PC-9 (cell line): ENCODE measurements at regions of chr9 and their contacts with region 1.

Region 1: GRCh38 chr9:72526901-72527800 is 5.7 kb downstream of the TMC1 start:
- DNase-seq: peak; percentile 94 to 97
- H3K4me3 ChIP-seq: peak overlapping the region; percentile 60
- H3K27ac ChIP-seq: peak overlapping the region; percentile 96
- H3K4me1 ChIP-seq: peaks cover 67% of the 10 kb centered on the region
- H3K27me3 ChIP-seq: no peaks in the 10 kb centered on the region
- CTCF ChIP-seq: no peak

Region 2: DNA sequence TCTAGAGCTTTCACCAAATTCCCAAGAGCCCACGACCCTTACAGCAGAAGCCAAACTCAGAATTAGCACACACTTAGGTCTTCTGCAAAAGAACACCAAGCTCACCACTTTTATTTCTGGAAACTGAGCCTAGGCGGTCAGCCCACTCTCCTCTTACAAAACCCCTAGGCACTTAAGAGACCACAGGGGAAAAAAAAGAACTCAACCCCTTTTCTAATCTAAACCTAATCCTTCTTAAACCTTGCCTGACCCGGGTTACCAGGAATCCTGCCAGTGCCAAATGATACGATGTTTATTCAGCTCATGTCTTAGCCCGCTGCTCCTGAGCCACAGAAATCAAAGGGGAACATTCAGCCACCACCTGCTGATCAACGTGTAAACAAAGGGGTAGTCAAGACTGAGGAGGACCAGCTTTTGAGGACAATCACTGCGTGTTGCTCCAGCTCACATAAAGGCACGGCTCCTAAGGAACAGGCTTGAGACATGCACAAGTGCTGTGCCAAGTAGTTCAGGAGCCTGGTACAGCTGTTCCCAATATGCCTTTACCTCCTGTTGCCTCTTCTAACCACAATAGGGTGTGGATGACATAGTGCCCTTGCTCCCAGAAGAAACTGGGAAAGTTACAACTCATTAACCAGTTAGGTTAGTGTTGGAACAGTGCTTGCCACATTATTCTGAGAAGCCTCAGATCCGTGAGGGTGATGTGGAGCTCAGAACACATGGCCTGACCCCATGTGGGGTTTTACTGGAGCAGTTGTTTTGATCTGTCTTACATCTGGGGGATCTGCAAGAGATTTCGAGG is 211.4 kb before region 1 on chr9:
- CTCF ChIA-PET with region 1: no interaction called
- POLR2A ChIA-PET with region 1: no interaction called
- intact Hi-C with region 1: loop called (anchors 5 kb)
- DNase-seq: peak; percentile 68 to 92
- H3K4me3 ChIP-seq: peak overlapping the region; percentile 36; the same call in 1 of the 2 replicates
- H3K27ac ChIP-seq: peak overlapping the region; percentile 70
- H3K4me1 ChIP-seq: peaks cover 39% of the 10 kb centered on the region
- H3K27me3 ChIP-seq: no peaks in the 10 kb centered on the region
- CTCF ChIP-seq: no peak

Region 3: GRCh38 chr9:72464857-72465592 is 62.1 kb before region 1 on chr9:
- CTCF ChIA-PET with region 1: no interaction called
- POLR2A ChIA-PET with region 1: interaction called, 13 read pairs
- intact Hi-C with region 1: no loop called
- DNase-seq: no peak
- H3K4me3 ChIP-seq: no peak overlapping the region
- H3K27ac ChIP-seq: no peak overlapping the region
- H3K4me1 ChIP-seq: no peaks in the 10 kb centered on the region
- H3K27me3 ChIP-seq: no peaks in the 10 kb centered on the region
- CTCF ChIP-seq: no peak

Region 4: DNA sequence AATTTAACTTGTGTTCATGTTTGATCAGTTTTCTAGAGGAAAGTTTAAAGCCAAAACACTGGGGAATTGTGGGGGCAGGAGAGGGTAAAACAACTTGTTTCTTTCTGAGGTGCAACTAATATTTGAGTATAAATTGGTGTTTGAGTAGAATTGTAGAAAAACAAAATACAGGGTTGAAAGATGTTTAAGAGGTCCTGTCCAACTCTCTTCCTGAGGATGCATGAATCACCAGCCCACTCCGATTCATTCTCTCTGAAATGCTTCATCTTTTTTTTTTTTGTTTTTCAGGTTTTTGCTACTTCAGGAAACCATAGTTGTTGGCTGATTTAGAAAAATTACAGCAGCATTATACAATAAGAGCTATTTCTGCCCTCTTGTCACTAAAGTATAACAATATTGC is 48.2 kb before region 1 on chr9:
- CTCF ChIA-PET with region 1: no interaction called
- POLR2A ChIA-PET with region 1: interaction called, 23 read pairs
- intact Hi-C with region 1: loop called (anchors 1 kb)
- DNase-seq: no peak
- H3K4me3 ChIP-seq: no peak overlapping the region
- H3K27ac ChIP-seq: peak overlapping the region; percentile 94
- H3K4me1 ChIP-seq: peaks cover 47% of the 10 kb centered on the region
- H3K27me3 ChIP-seq: no peaks in the 10 kb centered on the region
- CTCF ChIP-seq: no peak

Region 5: GRCh38 chr9:72557549-72557948 is 30.4 kb after region 1 on chr9:
- CTCF ChIA-PET with region 1: interaction called, 3 read pairs
- POLR2A ChIA-PET with region 1: interaction called, 9 read pairs
- intact Hi-C with region 1: loop called (anchors 1 kb)
- DNase-seq: peak; percentile 77 to 99
- H3K4me3 ChIP-seq: no peak overlapping the region
- H3K27ac ChIP-seq: peak overlapping the region; percentile 92
- H3K4me1 ChIP-seq: peaks cover 80% of the 10 kb centered on the region
- H3K27me3 ChIP-seq: no peaks in the 10 kb centered on the region
- CTCF ChIP-seq: no peak

Region 6: DNA sequence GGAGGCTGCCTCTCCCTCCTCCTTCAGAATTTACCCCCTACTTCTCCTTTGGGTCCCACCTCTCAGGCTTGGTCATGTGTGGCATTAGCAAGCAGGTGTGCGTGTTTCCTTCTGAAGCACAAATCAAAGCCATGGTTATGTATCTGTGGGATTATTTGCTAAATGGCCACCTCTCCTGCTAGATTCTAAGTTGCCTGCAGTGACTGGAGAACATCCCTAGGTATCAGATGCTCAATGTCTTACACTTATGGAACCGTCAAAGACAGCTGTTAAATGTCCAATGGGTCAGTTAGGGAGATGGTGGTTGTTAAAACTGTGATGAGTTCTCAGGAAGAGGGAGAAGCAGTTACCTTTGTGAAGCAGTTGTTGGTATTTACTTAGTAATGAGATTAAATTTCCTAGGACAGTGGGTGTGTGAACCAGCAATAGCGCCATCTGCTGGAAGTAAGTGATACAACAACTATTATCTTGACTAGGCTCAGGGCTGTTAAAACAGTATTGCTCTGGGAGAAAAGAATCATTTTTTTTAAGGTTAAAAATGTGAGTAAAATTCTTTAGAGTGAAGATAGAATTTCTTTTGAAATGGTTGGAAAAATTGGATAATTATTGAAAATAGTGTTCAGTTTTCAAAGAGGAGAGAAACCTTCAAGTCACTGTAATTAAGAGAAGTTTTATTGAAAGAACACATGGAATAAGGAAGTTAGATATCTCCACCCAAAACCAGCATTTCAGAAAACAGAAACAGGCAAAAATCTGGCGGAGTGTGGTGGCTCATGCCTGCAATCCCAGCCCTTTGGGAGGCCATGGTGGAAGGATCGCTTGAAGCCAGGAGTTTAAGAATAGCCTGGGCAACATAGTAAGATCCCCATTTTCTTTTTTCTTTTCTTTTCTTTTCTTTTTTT is 65.6 kb after region 1 on chr9:
- CTCF ChIA-PET with region 1: no interaction called
- POLR2A ChIA-PET with region 1: interaction called, 10 read pairs
- intact Hi-C with region 1: loop called (anchors 1 kb)
- DNase-seq: peak; percentile 37 to 67
- H3K4me3 ChIP-seq: no peak overlapping the region
- H3K27ac ChIP-seq: 0 out of 2 replicates have a peak overlapping the region, but pooled peaks have one; percentile 31
- H3K4me1 ChIP-seq: peaks cover 27% of the 10 kb centered on the region
- H3K27me3 ChIP-seq: no peaks in the 10 kb centered on the region
- CTCF ChIP-seq: peak; percentile 96

Region 7: GRCh38 chr9:72615931-72616330 is 88.8 kb after region 1 on chr9:
- CTCF ChIA-PET with region 1: no interaction called
- POLR2A ChIA-PET with region 1: no interaction called
- intact Hi-C with region 1: no loop called
- DNase-seq: no peak
- H3K4me3 ChIP-seq: no peak overlapping the region
- H3K27ac ChIP-seq: no peak overlapping the region
- H3K4me1 ChIP-seq: no peaks in the 10 kb centered on the region
- H3K27me3 ChIP-seq: no peaks in the 10 kb centered on the region
- CTCF ChIP-seq: no peak